ENCODE measurements at regions of chr20 and their contacts with region 1.

Region 1: GRCh38 chr20:3755814-3756480 is 11.6 kb downstream of the ADISSP start:
- DNase-seq: peak; percentile 55
- ATAC-seq: no peak

Region 2: GRCh38 chr20:3296261-3297078 is 459.5 kb before region 1 on chr20:
- intact Hi-C with region 1: loop called (anchors 5 kb)
- DNase-seq: no peak
- ATAC-seq: peak; percentile 54

Region 3: GRCh38 chr20:3995067-3995748 is 239.3 kb after region 1 on chr20:
- intact Hi-C with region 1: no loop called
- DNase-seq: no peak
- ATAC-seq: no peak

Region 4: DNA sequence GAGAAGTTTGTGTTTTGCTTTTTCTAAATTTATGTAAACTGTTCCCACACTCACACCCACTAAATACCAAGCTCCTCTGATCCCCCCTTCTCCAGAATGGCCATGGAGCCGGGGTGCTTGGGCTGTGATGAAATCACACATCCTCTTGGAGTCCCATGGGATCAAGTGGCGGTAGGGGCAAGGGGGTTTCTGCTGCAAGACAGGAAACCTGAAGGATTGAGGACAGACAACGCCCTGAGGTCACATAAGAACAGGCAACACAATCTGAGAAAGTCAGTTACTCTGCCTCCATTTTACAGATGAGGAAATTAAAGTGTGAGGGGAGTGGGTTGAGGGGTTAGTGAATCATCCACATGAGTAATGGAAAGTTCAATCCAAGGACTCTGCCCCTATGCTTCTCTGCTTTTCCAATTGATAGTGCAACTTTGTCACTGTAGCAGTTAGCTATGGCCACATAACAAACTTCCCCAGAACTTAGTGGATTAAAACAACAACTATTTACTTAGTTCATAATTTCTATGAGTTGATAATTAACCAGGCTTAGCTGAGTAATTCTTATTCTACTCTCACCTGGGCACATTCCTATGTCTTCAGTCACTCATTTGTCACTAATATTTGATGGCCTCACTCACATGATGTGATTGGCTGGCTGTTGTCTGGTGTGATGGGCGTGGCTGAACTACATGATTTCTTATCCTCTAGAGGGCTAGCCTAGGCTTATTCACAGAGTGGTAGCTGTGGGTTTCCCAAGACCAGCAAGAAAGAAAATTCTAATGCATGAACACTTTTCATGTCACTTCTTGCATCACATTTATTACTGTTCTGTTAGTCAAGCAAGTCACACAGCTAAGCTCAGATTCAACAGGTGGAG is 570.5 kb after region 1 on chr20:
- intact Hi-C with region 1: no loop called
- DNase-seq: no peak
- ATAC-seq: peak; percentile 37